T-cell (primary cell): ENCODE measurements at regions of chr6 and their contacts with region 1.

Region 1: DNA sequence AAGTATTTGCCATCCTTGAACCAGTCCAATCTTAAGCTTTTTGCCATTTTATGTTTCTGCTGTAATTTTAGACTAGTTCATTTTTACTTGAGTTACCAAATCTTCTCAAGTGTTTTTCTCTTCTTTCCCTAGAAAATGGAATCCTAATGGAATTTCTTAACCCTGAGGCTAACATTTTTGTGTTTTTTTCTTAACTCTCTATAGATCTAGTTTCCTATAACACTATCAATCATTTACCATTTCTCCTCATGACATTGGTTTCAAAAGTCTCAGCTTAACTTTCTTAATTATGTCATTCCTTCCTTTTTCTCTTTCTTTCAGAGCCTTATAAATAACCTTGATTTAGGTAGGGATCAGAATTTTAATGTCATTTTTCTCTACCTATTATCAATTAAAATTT is 54.8 kb downstream of the SENP6 start:
- DNase-seq: no peak
- ATAC-seq: no peak
- H3K4me3 ChIP-seq: no peak overlapping the region
- H3K4me3 Mint-ChIP-seq: no peak overlapping the region
- H3K27ac ChIP-seq: no peak overlapping the region
- H3K27ac Mint-ChIP-seq: peak overlapping the region in 1 of 2 donors; percentile 61
- H3K4me1 ChIP-seq: no peaks in the 10 kb centered on the region
- H3K4me1 Mint-ChIP-seq: peaks cover 0 to 2% (median 0%) of the 10 kb centered on the region in 3 donors
- H3K27me3 ChIP-seq: no peaks in the 10 kb centered on the region
- H3K27me3 Mint-ChIP-seq: no peaks in the 10 kb centered on the region

Region 2: DNA sequence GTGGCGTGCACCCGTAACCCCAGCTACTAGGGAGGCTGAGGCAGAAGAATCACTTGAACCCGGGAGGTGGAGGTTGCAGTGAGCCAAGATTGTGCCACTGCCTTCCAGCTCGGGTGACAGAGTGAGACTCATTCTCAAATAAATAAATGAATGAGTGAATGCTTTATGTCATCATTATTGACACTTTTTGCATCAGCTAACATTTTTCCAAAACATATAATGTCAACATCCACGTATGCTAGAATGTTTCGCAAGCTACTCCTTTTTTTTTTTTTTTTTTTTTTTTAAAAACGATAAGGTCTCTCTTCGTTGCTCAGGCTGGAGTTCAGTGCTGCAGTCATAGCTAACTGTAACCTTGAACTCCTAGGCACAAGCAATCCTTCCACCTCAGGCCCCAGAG is 17.4 kb after region 1 on chr6:
- CTCF ChIA-PET with region 1: interaction called in 1 of 2 experiments, 9 read pairs
- POLR2A ChIA-PET with region 1: interaction called in 1 of 2 experiments, 15 read pairs
- DNase-seq: no peak
- ATAC-seq: no peak
- H3K4me3 ChIP-seq: no peak overlapping the region
- H3K4me3 Mint-ChIP-seq: no peak overlapping the region
- H3K27ac ChIP-seq: no peak overlapping the region
- H3K27ac Mint-ChIP-seq: no peak overlapping the region
- H3K4me1 ChIP-seq: no peaks in the 10 kb centered on the region
- H3K4me1 Mint-ChIP-seq: no peaks in the 10 kb centered on the region
- H3K27me3 ChIP-seq: no peaks in the 10 kb centered on the region
- H3K27me3 Mint-ChIP-seq: no peaks in the 10 kb centered on the region

Region 3: GRCh38 chr6:75776461-75776860 is 120.0 kb after region 1 on chr6:
- CTCF ChIA-PET with region 1: no interaction called
- POLR2A ChIA-PET with region 1: no interaction called
- DNase-seq: no peak
- ATAC-seq: no peak
- H3K4me3 ChIP-seq: no peak overlapping the region
- H3K4me3 Mint-ChIP-seq: no peak overlapping the region
- H3K27ac ChIP-seq: no peak overlapping the region
- H3K27ac Mint-ChIP-seq: no peak overlapping the region
- H3K4me1 ChIP-seq: no peaks in the 10 kb centered on the region
- H3K4me1 Mint-ChIP-seq: peaks cover 0 to 6% (median 1%) of the 10 kb centered on the region in 3 donors
- H3K27me3 ChIP-seq: no peaks in the 10 kb centered on the region
- H3K27me3 Mint-ChIP-seq: peaks cover 0 to 5% of the 10 kb centered on the region in 2 donors